Activated naive CD4-positive, alpha-beta T cell treated with anti-CD3 and anti-CD28 coated beads for 36 hours (primary cell): ENCODE measurements at regions of chr14 and their contacts with region 1.

Region 1: DNA sequence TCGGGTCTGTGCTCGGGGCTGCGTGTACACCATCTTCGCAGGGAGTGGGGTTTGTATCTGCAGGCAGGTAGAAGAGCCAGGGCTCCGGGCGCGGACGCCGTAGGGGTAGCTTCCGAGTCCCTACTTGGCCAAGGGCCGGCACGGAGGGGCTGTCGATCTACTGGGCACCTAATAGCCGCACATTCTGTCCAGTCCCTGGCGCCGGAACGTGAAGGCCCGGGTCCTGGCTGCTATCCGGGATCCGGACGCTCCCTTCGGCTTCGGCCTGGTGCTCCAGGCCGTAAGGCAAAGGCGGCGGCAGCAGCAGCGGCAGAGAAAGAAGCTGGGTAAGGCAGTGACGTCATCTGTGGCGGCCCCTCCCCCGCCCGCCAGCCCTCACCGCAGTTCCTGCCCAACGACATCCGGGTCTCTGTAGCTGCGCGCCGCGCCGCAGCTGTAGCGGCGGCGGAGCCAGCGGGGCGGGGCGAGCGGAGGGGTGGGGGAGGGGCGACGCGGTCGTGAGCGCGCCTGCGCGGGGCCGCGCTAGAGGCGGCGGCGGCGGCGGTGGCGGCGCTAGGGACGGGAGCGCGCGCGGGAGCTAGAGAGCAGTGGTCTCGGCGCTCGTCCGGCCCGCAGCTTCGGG is at the start of gene PPM1A:
- DNase-seq: peak; percentile 94
- H3K4me3 Mint-ChIP-seq: peak within 1 kb of the TSS; percentile 94
- H3K27ac Mint-ChIP-seq: peak within 1 kb of the TSS; percentile 100
- H3K4me1 Mint-ChIP-seq: peaks cover 52% of the 10 kb centered on the region
- H3K27me3 Mint-ChIP-seq: no peaks in the 10 kb centered on the region
- total RNA-seq, gene PPM1A: 35.3 to 36.1 TPM

Region 2: GRCh38 chr14:58297762-58298476 is 1950.9 kb before region 1 on chr14:
- CTCF ChIA-PET with region 1: no interaction called
- intact Hi-C with region 1: loop called (anchors 2 kb)
- DNase-seq: peak; percentile 99
- H3K4me3 Mint-ChIP-seq: no peak overlapping the region
- H3K27ac Mint-ChIP-seq: no peak overlapping the region
- H3K4me1 Mint-ChIP-seq: peaks cover 43% of the 10 kb centered on the region
- H3K27me3 Mint-ChIP-seq: no peaks in the 10 kb centered on the region

Region 3: GRCh38 chr14:59926534-59926933 is 322.3 kb before region 1 on chr14:
- CTCF ChIA-PET with region 1: no interaction called
- intact Hi-C with region 1: loop called (anchors 5 kb)
- DNase-seq: no peak
- H3K4me3 Mint-ChIP-seq: no peak overlapping the region
- H3K27ac Mint-ChIP-seq: no peak overlapping the region
- H3K4me1 Mint-ChIP-seq: peaks cover 14% of the 10 kb centered on the region
- H3K27me3 Mint-ChIP-seq: peaks cover 20% of the 10 kb centered on the region

Region 4: GRCh38 chr14:60125918-60126317 is 122.9 kb before region 1 on chr14:
- CTCF ChIA-PET with region 1: no interaction called
- intact Hi-C with region 1: no loop called
- DNase-seq: no peak
- H3K4me3 Mint-ChIP-seq: no peak overlapping the region
- H3K27ac Mint-ChIP-seq: no peak overlapping the region
- H3K4me1 Mint-ChIP-seq: no peaks in the 10 kb centered on the region
- H3K27me3 Mint-ChIP-seq: no peaks in the 10 kb centered on the region

Region 5: DNA sequence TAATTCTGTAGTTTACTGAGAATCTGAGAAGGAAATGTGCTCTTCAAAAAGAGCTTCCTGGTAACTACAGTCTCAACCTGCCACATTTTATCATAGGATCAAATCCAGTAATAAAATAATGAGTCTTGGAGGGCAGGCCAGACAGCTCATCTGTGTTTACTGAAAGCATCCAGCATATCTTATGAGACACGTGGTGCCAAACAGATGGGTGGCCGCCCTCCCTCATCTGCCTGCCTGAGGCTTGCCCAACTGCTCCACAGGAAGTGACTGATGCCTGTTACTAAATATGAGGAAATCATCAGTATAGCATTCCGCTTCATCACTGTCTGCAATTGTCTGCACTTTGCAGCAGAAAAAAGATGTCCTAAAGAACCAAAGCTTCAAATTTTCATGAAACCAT is 97.1 kb before region 1 on chr14:
- CTCF ChIA-PET with region 1: no interaction called
- intact Hi-C with region 1: loop called (anchors 1 kb)
- DNase-seq: peak; percentile 87
- H3K4me3 Mint-ChIP-seq: no peak overlapping the region
- H3K27ac Mint-ChIP-seq: peak overlapping the region; percentile 86
- H3K4me1 Mint-ChIP-seq: peaks cover 30% of the 10 kb centered on the region
- H3K27me3 Mint-ChIP-seq: no peaks in the 10 kb centered on the region

Region 6: DNA sequence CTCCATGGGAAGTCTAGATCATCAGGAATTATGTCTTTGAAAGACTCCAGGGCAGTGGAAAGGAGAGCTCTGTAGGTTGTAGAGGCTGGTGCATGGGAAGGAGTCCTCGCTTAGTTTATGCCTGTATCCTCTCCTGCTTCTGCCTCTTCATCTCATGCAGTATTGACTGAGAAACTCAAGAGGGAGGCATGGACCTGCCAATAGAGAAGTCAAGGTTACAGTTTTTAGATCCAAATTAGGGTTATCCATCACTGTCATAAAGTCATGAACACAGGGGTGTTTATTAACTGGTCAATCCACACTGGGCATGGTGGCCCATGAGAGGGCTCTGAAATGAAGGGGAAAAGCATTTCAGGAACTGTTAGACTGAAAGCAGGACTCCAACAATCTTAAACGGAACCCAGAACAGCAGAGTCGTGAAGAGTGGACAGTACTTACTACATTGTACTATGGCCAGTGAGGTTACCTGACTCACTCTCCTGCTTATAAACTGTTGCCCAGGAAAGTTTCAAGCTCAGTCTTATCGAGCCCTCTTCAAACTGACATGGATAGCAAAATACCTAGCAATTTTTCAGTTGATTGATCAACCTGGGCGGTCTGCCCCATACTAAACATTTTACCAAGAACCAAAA is 53.5 kb before region 1 on chr14:
- CTCF ChIA-PET with region 1: no interaction called
- intact Hi-C with region 1: loop called (anchors 1 kb)
- DNase-seq: no peak
- H3K4me3 Mint-ChIP-seq: no peak overlapping the region
- H3K27ac Mint-ChIP-seq: no peak overlapping the region
- H3K4me1 Mint-ChIP-seq: peaks cover 11% of the 10 kb centered on the region
- H3K27me3 Mint-ChIP-seq: peaks cover 10% of the 10 kb centered on the region

Region 7: GRCh38 chr14:60331201-60332045 is 82.6 kb after region 1 on chr14:
- CTCF ChIA-PET with region 1: interaction called, 16 read pairs
- intact Hi-C with region 1: loop called (anchors 1 kb)
- DNase-seq: peak; percentile 91
- H3K4me3 Mint-ChIP-seq: peak overlapping the region; percentile 83
- H3K27ac Mint-ChIP-seq: peak overlapping the region; percentile 89
- H3K4me1 Mint-ChIP-seq: peaks cover 32% of the 10 kb centered on the region
- H3K27me3 Mint-ChIP-seq: peaks cover 17% of the 10 kb centered on the region

Region 8: DNA sequence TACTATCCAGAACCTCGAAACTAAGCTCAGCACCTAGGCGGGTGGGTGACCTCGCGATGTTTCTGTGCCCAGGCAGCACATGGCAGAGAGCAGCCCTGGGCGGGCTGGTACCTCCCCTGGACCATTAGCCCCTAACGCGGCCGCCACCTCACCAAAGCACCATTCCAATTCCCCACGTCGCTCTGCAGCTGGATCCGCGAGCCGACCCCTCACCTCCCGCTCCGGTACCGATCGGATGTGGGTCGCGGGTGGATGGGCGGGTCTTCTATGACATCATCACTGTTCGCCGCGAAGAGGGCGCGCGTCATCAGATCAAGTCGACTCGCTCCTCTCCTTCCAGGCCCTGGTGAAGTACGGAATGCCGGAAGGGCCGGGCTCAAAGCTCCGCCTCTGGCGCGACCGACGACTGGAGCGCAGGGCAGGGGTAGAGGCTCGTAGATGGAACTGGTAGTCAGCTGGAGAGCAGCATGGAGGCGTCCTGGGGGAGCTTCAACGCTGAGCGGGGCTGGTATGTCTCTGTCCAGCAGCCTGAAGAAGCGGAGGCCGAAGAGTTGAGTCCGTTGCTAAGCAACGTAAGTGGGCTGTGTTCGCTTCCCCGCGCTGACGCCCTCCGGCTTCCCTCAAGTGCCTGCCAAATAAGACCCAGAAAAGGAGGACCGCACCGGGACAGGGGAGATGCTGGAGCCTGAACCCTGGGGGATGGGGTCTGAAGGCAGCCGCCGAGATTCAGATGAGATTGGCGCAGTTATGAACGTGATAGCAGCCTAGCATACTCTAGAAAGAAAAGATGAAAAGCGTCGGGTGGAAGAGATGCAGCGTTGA is 732.2 kb after region 1 on chr14 and contains the starts of genes SLC38A6 and TRMT5:
- CTCF ChIA-PET with region 1: no interaction called
- intact Hi-C with region 1: loop called (anchors 2 kb)
- DNase-seq: peak; percentile 95
- H3K4me3 Mint-ChIP-seq: no peak within 1 kb of the TSS
- H3K27ac Mint-ChIP-seq: no peak within 1 kb of the TSS
- H3K4me1 Mint-ChIP-seq: peaks cover 31% of the 10 kb centered on the region
- H3K27me3 Mint-ChIP-seq: no peaks in the 10 kb centered on the region
- total RNA-seq, gene SLC38A6: 4.1 to 4.3 TPM
- total RNA-seq, gene TRMT5: 13.9 to 18.3 TPM